ENCODE measurements at regions of chr4 and their contacts with region 1.

Region 1: GRCh38 chr4:38856524-38857337 is at the start of gene TLR6:
- DNase-seq: peak in 2 of 10 donors; percentile 18 to 38
- H3K4me3 ChIP-seq: peak within 1 kb of the TSS in 53 of 59 donors; percentile 1 to 61 (median 34)
- H3K27ac ChIP-seq: peak within 1 kb of the TSS in 56 of 59 donors; percentile 7 to 86 (median 64)
- H3K27me3 ChIP-seq: no peaks in the 10 kb centered on the region
- CTCF ChIP-seq: peak; percentile 55 to 86 (median 76)
- total RNA-seq, gene TLR6: 1.1 to 8.9 (median 3.7) TPM

Region 2: GRCh38 chr4:38782452-38783108 is 74.2 kb before region 1 on chr4 and contains the start of gene TLR10:
- intact Hi-C with region 1: loop called in 1 of 2 experiments (anchors 10 kb)
- DNase-seq: peak in 2 of 10 donors; percentile 30 to 42
- H3K4me3 ChIP-seq: peak within 1 kb of the TSS in 38 of 59 donors; percentile 4 to 55 (median 28)
- H3K27ac ChIP-seq: peak within 1 kb of the TSS in 1 of 59 donors; percentile 15
- H3K27me3 ChIP-seq: no peaks in the 10 kb centered on the region
- CTCF ChIP-seq: peak; percentile 64 to 89 (median 82)
- total RNA-seq, gene TLR10: 0.27 to 6.7 (median 1.5) TPM